Posterior cingulate gyrus (tissue), 11 donors: ENCODE measurements at regions of chr12 and their contacts with region 1.

Region 1: DNA sequence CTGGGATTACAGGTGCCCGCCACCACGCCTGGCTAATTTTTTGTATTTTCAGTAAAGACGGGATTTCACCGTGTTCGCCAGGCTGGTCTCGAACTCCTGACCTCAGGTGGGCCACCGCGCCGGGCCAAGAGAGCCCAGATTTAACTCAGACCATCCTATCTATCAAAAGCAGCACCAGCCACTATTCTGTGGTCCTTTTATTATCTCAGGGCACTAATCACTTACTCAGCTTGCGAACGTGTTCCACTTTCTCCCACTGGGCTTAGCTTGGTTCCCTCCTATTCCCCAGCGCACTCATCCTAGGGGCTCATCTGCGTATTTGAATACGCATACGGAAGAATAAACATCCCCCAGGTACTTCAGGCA is 16.2 kb upstream of the AACS start:
- DNase-seq: no peak

Region 2: DNA sequence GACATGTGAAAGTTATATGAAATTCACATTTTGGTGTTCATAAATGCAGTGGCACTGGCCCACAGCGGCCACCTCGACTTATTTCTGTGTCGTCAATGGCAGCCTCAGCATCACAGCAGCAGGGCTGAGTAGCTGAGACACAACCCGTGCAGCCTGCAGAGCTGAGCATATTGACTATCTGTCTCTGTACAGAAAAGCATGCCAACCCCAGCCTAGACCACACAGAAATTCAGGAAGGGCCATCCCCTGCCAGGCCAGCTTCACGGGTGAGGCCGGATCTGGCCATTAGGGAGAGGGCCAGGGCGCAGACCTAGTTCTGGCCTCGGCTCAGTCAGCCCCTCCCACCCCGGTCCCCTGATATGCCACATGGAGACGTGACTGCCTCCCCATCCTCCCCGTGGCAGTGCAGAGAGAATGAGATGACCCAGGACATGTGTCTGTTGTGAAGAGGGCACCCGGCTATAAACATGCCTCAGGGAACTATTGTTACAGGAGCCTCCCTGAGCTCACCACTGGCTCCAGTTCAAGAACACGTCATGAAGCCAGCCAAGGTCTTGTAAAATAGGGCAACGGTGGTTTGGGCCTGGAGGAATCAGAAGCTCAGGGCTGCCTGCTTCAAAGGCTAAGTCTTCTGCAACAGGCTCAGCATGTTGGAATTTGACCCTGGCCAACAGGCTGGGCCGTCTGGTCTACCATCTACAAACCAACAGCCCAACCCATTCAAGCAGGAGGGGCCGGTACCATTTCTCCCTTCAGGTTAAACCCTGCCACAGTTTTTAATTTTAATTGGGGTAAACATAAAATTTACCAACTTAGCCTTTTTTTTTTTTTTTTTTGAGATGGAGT is 210.9 kb before region 1 on chr12:
- intact Hi-C with region 1: no loop called
- DNase-seq: peak in 6 of 10 donors; percentile 30 to 81 (median 62)

Region 3: GRCh38 chr12:124992874-124993625 is 56.0 kb before region 1 on chr12:
- intact Hi-C with region 1: loop called (anchors 5 kb)
- DNase-seq: peak in 5 of 10 donors; percentile 20 to 81 (median 59)

Region 4: GRCh38 chr12:125065021-125065795 is 16.1 kb after region 1 on chr12 and contains the start of gene AACS:
- intact Hi-C with region 1: loop called (anchors 1 kb)
- DNase-seq: peak; percentile 70 to 97 (median 83)